Gastrocnemius medialis (tissue), 4 donors: ENCODE measurements at regions of chr4 and their contacts with region 1.

Region 1: GRCh38 chr4:148441986-148442831 is at the start of gene NR3C2:
- DNase-seq: peak; percentile 100
- ATAC-seq: peak; percentile 78 to 81
- H3K4me3 ChIP-seq: peak within 1 kb of the TSS; percentile 94 to 100 (median 97)
- H3K27ac ChIP-seq: peak within 1 kb of the TSS; percentile 97 to 98 (median 98)
- H3K4me1 ChIP-seq: peaks cover 2 to 37% of the 10 kb centered on the region in 2 donors
- H3K27me3 ChIP-seq: no peaks in the 10 kb centered on the region
- CTCF ChIP-seq: no peak
- POLR2A ChIP-seq: peak; percentile 100
- total RNA-seq, gene NR3C2: 5.6 to 10.4 (median 8.1) TPM

Region 2: DNA sequence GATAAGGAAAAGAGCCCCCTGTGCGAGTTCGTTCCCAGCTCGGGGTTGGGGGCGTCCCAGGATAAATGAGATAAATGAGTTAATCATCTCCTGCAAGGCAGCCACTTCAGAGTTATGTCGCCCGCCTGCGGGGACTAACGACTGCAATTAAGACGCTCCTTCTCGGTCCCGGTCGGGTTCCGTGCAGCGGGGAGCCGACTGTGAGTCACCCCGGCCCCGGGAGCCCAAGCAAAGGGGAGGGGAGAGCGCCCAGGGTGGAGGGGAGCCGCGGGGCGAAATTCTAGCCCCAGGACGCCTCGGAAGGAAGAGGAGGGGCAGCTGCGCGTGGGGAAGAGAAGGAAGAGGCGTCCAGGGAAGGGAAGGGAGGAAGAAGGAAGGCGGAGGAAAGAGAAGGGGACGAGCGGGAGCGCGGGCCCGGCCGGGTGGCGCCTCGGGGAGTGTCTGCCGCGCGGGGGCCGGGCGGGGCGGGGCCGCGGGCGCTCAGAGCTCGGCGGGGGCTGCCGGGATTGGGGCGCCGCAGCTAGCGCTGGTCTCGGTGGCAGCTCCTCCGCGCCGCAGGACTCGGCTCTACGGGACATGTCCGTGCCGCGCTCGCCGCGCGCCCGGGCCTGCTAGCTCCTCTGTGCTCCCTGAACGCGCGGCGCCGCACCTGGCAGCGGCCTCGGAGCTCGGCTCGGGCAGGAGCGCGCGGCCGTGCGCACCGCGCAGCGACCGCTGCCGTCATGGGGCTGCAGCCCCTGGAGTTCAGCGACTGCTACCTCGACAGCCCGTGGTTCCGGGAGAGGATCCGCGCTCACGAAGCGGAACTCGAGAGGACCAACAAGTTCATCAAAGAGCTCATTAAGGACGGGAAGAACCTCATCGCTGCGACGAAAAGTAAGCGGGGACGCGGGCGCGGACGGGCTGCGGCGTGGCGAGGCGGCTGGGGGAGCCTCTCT is 710.4 kb before region 1 on chr4 and contains the start of gene ARHGAP10:
- in situ Hi-C with region 1: no loop called
- intact Hi-C with region 1: loop called (anchors 5 kb)
- DNase-seq: peak; percentile 50 to 69
- ATAC-seq: peak; percentile 61 to 69
- H3K4me3 ChIP-seq: peak within 1 kb of the TSS; percentile 70 to 97 (median 90)
- H3K27ac ChIP-seq: peak within 1 kb of the TSS; percentile 84 to 97 (median 96)
- H3K4me1 ChIP-seq: peaks cover 22 to 40% of the 10 kb centered on the region in 2 donors
- H3K27me3 ChIP-seq: no peaks in the 10 kb centered on the region
- CTCF ChIP-seq: peak in 1 of 5 experiments; percentile 13
- POLR2A ChIP-seq: peak; percentile 74 to 77
- total RNA-seq, gene ARHGAP10: 22.1 to 34.6 (median 28.0) TPM

Region 3: DNA sequence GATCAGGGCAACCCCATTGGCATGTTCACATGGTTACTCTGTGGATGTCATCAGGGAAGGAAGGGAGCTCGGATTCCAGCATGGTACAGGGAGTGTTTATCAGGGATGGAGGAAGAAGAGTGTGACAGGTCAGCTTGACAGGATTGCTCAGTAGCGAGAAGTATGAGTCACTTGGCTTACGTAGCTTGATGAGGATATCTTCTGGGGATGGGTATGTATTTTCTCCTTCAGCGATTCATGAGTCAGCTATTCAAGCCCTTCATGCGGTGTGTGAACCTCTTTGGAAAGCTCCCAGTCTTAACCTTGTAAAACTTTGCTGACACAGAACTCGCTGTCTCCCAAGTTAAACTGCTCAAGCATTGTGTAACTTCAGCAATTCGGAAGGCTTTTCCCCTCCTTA is 434.9 kb before region 1 on chr4:
- in situ Hi-C with region 1: no loop called
- intact Hi-C with region 1: loop called (anchors 1 kb)
- DNase-seq: peak; percentile 82 to 83
- ATAC-seq: peak; percentile 96 to 99
- H3K4me3 ChIP-seq: peak overlapping the region in 1 of 4 donors; percentile 10
- H3K27ac ChIP-seq: peak overlapping the region; percentile 74 to 88 (median 76)
- H3K4me1 ChIP-seq: peaks cover 45 to 52% of the 10 kb centered on the region in 2 donors
- H3K27me3 ChIP-seq: no peaks in the 10 kb centered on the region
- CTCF ChIP-seq: no peak
- POLR2A ChIP-seq: no peak

Region 4: DNA sequence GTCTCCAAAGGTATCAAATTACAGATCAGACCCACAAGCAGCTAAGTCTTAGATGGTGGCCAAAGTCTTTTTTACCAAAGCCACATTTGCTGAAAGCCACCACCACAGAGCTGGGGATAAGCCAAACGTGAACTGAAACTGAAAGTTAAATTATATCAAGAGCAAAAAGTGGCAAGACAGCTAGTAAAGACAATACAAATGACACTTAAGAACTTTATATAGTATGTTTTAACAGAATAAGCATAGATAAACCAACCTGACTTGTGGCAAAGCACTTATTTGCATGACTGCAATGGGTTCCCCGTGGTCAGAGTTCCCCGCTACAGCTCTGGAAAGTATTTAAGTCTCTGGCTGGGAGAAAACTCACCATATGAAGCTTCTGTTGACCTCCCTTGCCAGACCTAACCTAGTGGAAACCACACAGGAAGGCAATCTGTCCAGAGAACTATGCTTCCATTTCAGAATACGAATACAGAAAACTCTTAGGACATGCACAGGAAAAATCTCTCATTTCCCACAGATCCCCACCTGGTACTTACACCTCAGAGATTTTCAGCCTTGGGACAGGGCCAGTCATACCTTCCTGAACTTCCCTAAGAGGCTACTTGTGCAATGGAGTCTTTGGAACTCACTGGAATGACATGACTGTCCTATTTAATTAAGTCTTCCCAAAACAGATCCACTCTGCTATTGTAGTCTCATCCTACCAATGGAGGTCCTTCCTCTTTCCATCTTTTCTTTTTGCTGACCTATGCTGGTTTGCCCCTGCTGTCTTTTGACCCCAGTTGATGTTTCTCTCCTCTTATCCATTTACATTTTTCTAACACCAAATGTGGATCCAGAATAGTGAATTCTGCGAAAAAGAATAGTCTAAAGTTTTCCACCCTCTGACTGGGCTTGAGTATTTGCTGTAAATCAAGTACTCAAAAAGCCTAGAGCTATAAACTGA is 225.1 kb before region 1 on chr4:
- in situ Hi-C with region 1: no loop called
- intact Hi-C with region 1: loop called (anchors 10 kb)
- DNase-seq: no peak
- ATAC-seq: no peak
- H3K4me3 ChIP-seq: peak overlapping the region; percentile 27 to 58 (median 34)
- H3K27ac ChIP-seq: peak overlapping the region; percentile 28 to 63 (median 42)
- H3K4me1 ChIP-seq: peaks cover 27 to 37% of the 10 kb centered on the region in 2 donors
- H3K27me3 ChIP-seq: no peaks in the 10 kb centered on the region
- CTCF ChIP-seq: no peak
- POLR2A ChIP-seq: no peak

Region 5: GRCh38 chr4:148315049-148315448 is 127.2 kb before region 1 on chr4:
- in situ Hi-C with region 1: no loop called
- intact Hi-C with region 1: loop called (anchors 10 kb)
- DNase-seq: peak in 1 of 2 donors; percentile 34
- ATAC-seq: peak; percentile 55 to 70
- H3K4me3 ChIP-seq: no peak overlapping the region
- H3K27ac ChIP-seq: peak overlapping the region in 2 of 4 donors; percentile 19
- H3K4me1 ChIP-seq: peaks cover 38 to 44% of the 10 kb centered on the region in 2 donors
- H3K27me3 ChIP-seq: no peaks in the 10 kb centered on the region
- CTCF ChIP-seq: no peak
- POLR2A ChIP-seq: no peak

Region 6: DNA sequence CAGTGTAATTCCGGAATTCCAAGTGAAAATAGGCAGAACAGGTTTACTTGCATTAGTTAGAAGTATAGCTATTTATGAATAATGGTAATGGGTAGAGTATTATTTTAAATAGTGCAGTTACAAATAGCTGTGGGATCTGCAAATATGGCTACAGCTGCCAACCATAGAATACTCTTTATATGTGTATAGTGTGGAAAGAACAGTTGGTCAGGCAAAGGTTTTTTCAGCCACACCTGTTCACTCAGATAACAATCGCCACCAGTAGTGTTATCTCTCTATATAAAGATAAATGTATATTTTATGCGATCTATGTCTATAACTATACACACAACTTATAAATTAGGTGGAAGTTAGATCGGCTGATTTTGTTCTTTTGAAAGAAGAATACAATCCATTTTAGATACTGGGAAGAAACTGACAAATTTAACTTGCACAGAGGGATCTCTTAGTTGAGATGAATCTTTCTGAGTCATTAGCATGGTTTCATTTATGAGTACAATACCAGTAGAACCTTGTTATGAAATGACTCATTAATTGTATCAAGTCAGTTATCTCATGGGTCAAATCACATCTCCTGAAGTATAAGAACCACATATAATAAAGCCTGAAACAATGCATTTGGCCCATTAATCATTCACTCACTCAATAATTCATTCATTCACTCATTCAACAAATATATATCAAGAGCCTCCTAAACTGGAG is 100.9 kb after region 1 on chr4:
- in situ Hi-C with region 1: loop called in 1 of 4 experiments (anchors 25 kb)
- intact Hi-C with region 1: no loop called
- DNase-seq: no peak
- ATAC-seq: no peak
- H3K4me3 ChIP-seq: no peak overlapping the region
- H3K27ac ChIP-seq: no peak overlapping the region
- H3K4me1 ChIP-seq: no peaks in the 10 kb centered on the region
- H3K27me3 ChIP-seq: no peaks in the 10 kb centered on the region
- CTCF ChIP-seq: no peak
- POLR2A ChIP-seq: no peak